Right cardiac atrium (tissue), 5 donors: ENCODE measurements at regions of chr9 and their contacts with region 1.

Region 1: DNA sequence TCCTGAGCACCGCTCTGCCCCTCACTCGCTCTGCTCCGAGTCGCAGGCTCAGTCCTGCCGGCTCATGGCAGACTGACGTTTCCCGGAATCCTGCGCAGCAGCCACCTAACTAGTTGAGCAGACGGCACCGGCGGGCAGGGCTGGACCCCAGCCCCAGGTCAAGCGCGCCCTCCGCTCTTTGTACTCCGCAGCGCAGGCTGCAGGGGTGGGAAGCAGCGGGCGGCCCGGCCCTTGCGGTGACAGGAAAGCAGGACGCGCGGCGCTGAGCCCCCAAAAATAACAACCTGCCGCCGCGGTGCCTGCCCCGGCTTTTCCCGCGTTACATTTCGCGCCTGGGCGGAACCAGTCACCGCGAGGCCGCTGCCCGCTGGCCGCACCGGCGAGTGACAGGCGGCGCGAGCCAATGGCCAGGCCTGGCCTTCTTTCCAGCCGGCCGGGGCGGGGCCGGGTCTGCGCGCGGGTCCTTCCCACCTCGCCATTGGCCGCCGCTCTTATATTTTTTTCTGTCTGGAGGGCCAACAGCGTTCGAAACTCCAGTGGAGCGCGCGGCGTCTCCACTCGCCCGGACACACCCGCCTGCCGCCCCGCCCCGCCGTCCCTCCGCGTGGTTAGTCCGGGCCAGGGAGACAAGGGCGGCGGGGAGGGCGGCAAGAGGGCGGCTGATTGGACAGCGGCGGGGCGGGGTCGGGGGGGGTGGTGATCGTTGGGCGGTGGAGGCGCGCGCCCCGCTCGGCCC is at the start of gene ZNF367:
- DNase-seq: peak; percentile 99
- ATAC-seq: peak; percentile 95 to 96
- H3K4me3 ChIP-seq: peak within 1 kb of the TSS; percentile 89
- H3K27ac ChIP-seq: peak within 1 kb of the TSS; percentile 96
- H3K4me1 ChIP-seq: no peaks in the 10 kb centered on the region
- H3K27me3 ChIP-seq: no peaks in the 10 kb centered on the region
- total RNA-seq, gene ZNF367: 1.3 to 1.7 (median 1.5) TPM

Region 2: DNA sequence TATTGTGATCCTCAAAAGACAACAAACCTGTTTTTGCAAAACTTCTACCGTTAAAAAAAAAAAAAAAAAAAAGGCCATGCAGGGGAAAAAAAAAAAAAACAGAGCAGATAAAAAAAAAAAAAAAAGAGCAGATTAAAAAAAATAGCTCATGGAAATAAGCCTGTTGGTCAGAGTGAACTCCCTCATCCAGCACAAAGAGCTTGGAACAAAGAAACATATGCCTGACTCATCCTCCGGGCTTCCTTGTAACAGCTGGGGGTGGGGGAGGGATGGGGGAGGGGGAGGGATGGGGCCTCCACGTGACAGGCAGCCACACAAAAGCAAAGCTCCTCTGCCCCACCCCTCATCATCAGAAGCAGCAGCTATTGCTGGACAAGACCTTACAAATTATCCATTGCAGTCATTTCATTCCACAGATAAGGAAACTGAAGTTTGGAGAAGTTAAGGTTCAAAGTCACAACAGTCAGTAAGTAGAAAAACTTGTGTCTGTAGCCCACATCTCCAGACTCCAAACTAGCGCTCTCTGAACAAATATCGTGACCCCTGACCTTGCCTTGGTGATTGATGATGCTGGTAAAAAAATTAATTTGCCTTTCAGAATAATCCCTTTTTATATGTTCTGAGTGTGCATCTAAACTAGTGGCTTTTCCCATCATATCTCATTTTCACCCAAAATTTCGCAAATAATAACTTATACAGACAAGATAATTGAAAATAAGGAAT is 73.6 kb before region 1 on chr9:
- intact Hi-C with region 1: loop called in 1 of 4 experiments (anchors 10 kb)
- DNase-seq: peak; percentile 61 to 68 (median 67)
- ATAC-seq: peak; percentile 88 to 95
- H3K4me3 ChIP-seq: no peak overlapping the region
- H3K27ac ChIP-seq: peak overlapping the region; percentile 48
- H3K4me1 ChIP-seq: peaks cover 2% of the 10 kb centered on the region
- H3K27me3 ChIP-seq: no peaks in the 10 kb centered on the region

Region 3: GRCh38 chr9:96844040-96844439 is 425.8 kb after region 1 on chr9:
- intact Hi-C with region 1: no loop called
- DNase-seq: no peak
- ATAC-seq: no peak
- H3K4me3 ChIP-seq: no peak overlapping the region
- H3K27ac ChIP-seq: no peak overlapping the region
- H3K4me1 ChIP-seq: no peaks in the 10 kb centered on the region
- H3K27me3 ChIP-seq: no peaks in the 10 kb centered on the region